ENCODE measurements at regions of chr4 and their contacts with region 1.

Region 1: DNA sequence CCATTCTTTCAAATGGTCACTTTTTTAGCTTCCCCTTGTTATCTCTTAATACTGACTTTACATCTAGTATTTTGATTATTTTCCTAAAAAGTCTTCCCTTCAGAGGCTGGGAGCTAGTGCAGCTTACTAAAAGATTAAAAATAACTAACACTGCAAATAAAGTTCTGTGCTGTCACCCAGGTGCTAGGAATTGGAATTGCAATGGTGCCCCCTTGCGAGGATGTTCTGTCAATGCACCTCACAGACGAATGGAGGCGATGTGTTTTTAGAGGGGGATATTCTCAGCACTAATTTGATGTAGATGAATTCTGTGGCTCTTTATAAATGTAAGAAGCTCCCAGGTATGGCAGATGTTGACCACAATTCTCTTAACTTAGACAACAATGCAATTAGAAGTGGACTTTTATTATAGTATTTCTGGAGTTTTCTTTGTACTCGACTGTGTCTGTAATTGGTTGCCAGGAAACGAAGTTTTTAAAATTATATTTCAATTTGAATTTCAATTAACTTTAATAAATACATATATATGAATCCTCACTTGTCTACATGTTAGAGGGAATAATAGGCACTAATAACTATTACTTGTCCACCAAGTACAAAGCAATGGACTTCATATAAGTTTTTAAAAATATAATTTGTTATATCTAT is 22.0 kb upstream of the SMIM31 start:
- DNase-seq: no peak
- H3K4me3 ChIP-seq: no peak overlapping the region
- H3K27ac ChIP-seq: no peak overlapping the region
- H3K27me3 ChIP-seq: no peaks in the 10 kb centered on the region
- CTCF ChIP-seq: peak; percentile 78

Region 2: GRCh38 chr4:164748375-164748774 is 16.4 kb after region 1 on chr4:
- CTCF ChIA-PET with region 1: interaction called, 10 read pairs
- POLR2A ChIA-PET with region 1: no interaction called
- DNase-seq: no peak
- H3K4me3 ChIP-seq: no peak overlapping the region
- H3K27ac ChIP-seq: no peak overlapping the region
- H3K27me3 ChIP-seq: no peaks in the 10 kb centered on the region
- CTCF ChIP-seq: peak; percentile 40

Measured in AG04450 (cell line).